Left ventricle myocardium superior (tissue), 1 donor: ENCODE measurements at regions of chr16 and their contacts with region 1.

Region 1: GRCh38 chr16:28069971-28070794 is 6.7 kb upstream of the GSG1L start:
- DNase-seq: no peak
- ATAC-seq: peak; percentile 45

Region 2: GRCh38 chr16:27972500-27972899 is 97.7 kb before region 1 on chr16:
- intact Hi-C with region 1: loop called (anchors 2 kb)
- DNase-seq: no peak
- ATAC-seq: peak; percentile 68

Region 3: DNA sequence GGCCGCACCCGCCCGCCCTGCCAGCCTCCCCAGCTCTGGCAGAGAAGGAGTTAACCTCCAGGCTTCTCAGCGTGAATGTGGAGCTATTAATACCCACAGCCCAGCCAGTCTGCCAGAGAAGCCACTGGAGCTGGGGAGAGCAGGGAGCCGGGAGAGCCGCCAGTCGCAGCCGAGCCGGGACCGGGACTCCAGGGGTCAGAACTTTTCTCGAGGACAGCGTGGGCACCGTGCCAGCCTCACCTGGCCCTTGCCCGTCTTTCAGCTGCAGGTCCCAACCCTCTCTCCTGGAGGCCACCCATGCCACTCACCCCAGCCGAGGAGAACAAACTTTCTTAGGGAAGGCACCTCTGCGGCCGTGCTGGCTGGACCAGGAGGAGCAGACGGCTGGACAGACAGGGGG is 188.4 kb after region 1 on chr16:
- intact Hi-C with region 1: no loop called
- DNase-seq: peak; percentile 83
- ATAC-seq: peak; percentile 67